Activated naive CD4-positive, alpha-beta T cell treated with anti-CD3 and anti-CD28 coated beads for 36 hours (primary cell): ENCODE measurements at regions of chr20 and their contacts with region 1.

Region 1: GRCh38 chr20:23366384-23366783 is 4.4 kb downstream of the GZF1 start:
- DNase-seq: no peak
- H3K4me3 Mint-ChIP-seq: peak overlapping the region; percentile 34
- H3K27ac Mint-ChIP-seq: peak overlapping the region; percentile 56
- H3K4me1 Mint-ChIP-seq: peaks cover 48% of the 10 kb centered on the region
- H3K27me3 Mint-ChIP-seq: no peaks in the 10 kb centered on the region

Region 2: DNA sequence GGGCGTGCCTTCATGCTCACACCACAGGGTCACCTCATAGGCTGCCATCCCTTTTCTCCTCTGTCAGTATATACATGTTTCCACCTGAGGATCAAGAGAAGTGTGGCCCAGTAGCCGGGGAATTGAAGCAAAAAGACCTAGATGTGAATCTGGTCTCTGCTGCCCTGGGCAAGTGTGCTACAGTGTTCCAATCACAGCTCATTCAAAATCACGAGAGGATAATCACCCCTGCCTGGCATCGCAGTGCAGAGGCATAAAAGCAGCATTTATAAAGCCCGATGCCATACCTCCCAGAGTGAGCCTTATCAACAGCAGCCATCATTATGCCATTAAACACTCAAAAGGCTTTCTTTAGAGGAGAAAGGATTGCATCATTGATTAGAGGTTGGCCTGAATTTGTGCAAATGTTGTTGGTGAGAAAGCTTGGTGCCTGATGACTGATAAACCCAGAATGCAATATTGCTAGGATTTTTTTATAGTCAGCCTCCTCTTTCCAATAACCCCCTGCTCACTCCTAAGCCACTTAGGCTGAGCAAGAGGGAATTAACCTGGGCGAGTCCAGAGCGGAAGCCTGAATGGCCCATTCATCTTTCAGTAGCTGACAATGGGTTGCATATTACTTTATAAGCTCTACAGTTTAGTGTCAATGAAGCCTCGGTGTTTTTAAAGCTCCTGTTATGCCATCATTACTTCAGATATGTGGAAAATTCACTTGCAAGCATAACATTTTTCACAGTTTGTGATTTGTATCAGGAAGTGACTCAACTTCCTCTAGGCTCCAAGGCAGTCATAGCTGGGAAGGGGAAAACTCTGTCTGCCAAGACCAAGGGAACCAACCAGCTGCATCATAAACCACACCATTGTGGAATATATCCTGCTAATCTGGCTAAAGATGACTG is 108.3 kb before region 1 on chr20:
- CTCF ChIA-PET with region 1: no interaction called
- intact Hi-C with region 1: no loop called
- DNase-seq: no peak
- H3K4me3 Mint-ChIP-seq: no peak overlapping the region
- H3K27ac Mint-ChIP-seq: no peak overlapping the region
- H3K4me1 Mint-ChIP-seq: no peaks in the 10 kb centered on the region
- H3K27me3 Mint-ChIP-seq: peaks cover 9% of the 10 kb centered on the region

Region 3: DNA sequence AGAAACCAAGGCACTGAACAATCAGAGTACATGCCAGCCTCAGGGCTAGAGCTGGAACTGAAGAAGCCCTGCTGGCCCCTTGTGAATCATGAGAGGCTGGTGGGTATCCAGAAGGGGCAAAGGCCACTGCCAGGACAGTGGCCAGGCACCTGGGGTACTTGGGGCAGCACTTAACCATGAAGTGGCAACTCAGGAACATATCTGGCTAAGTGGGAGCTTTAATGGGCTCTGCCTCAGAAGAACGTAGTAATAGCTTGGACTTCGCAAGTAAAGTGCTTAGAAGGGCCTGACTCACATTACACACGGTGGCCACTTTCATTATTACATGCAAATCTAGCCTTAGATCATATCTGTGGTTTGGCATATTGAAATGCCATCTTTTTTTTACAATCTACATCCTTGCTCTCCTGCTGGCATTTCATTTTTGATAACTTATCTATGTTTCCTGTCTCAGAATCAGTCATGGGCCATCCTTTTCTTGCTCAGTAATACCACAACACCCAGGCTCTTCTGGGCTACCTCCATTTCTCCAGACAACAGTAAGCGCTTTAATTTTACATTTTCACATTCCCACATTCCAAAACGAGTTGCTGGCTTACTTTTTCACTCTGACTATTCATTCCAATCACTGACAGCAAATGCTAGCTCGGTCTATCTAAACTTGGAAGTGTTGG is 33.3 kb after region 1 on chr20:
- CTCF ChIA-PET with region 1: interaction called, 4 read pairs
- intact Hi-C with region 1: loop called (anchors 1 kb)
- DNase-seq: peak; percentile 15
- H3K4me3 Mint-ChIP-seq: no peak overlapping the region
- H3K27ac Mint-ChIP-seq: no peak overlapping the region
- H3K4me1 Mint-ChIP-seq: peaks cover 27% of the 10 kb centered on the region
- H3K27me3 Mint-ChIP-seq: no peaks in the 10 kb centered on the region

Region 4: DNA sequence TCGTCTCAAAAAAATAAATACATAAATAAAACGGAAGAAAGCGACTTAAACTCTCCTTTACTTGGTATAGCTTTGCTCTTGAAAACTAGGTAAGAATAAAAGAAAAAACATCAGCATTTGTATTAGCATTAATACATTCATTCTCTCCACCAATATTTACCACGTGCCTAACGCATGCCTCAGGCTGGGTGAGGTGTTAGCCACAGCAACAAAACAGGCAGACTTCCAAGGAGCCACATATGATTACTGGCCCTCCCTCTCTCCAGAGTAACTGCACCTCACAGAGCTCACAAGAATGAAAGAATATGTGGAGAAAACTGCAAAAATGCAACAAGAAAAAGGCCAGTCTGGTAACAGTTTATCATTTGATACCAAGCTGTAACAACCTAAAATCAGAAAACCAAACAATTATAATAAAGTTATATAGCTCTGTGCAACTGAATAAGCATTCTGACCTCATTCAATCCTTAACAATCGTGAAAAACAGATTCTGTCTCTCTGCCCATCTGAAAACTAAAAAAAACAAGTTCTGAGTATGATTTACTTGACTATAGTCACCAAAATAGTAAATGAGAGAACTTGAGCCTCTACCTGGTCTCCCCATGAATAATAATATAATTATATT is 49.7 kb after region 1 on chr20:
- CTCF ChIA-PET with region 1: no interaction called
- intact Hi-C with region 1: loop called (anchors 1 kb)
- DNase-seq: no peak
- H3K4me3 Mint-ChIP-seq: no peak overlapping the region
- H3K27ac Mint-ChIP-seq: no peak overlapping the region
- H3K4me1 Mint-ChIP-seq: peaks cover 39% of the 10 kb centered on the region
- H3K27me3 Mint-ChIP-seq: no peaks in the 10 kb centered on the region

Region 5: GRCh38 chr20:23420943-23421931 is 54.9 kb after region 1 on chr20 and contains the start of gene NAPB:
- CTCF ChIA-PET with region 1: no interaction called
- intact Hi-C with region 1: loop called (anchors 1 kb)
- DNase-seq: peak; percentile 94
- H3K4me3 Mint-ChIP-seq: peak within 1 kb of the TSS; percentile 81
- H3K27ac Mint-ChIP-seq: no peak within 1 kb of the TSS
- H3K4me1 Mint-ChIP-seq: peaks cover 24% of the 10 kb centered on the region
- H3K27me3 Mint-ChIP-seq: peaks cover 5% of the 10 kb centered on the region
- total RNA-seq, gene NAPB: 5.4 to 7.6 TPM

Region 6: DNA sequence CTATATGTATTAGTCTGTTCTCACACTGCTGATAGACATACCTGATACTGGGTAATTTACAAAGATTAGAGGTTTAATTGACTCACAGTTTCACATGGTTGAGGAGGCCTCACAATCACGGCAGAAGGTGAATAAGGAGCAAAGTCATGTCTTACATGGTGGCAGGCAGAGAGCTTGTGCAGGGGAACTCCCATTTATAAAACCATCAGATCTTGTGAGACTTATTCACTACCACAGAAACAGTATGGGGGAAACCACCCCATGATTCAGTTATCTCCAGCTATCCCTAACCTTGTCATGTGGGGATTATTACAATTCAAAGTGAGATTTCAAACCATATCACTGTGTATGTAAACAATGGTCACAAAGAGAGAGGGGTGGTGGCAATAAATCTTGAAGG is 131.2 kb after region 1 on chr20:
- CTCF ChIA-PET with region 1: no interaction called
- intact Hi-C with region 1: loop called (anchors 1 kb)
- DNase-seq: peak; percentile 58
- H3K4me3 Mint-ChIP-seq: no peak overlapping the region
- H3K27ac Mint-ChIP-seq: no peak overlapping the region
- H3K4me1 Mint-ChIP-seq: peaks cover 8% of the 10 kb centered on the region
- H3K27me3 Mint-ChIP-seq: peaks cover 20% of the 10 kb centered on the region

Region 7: DNA sequence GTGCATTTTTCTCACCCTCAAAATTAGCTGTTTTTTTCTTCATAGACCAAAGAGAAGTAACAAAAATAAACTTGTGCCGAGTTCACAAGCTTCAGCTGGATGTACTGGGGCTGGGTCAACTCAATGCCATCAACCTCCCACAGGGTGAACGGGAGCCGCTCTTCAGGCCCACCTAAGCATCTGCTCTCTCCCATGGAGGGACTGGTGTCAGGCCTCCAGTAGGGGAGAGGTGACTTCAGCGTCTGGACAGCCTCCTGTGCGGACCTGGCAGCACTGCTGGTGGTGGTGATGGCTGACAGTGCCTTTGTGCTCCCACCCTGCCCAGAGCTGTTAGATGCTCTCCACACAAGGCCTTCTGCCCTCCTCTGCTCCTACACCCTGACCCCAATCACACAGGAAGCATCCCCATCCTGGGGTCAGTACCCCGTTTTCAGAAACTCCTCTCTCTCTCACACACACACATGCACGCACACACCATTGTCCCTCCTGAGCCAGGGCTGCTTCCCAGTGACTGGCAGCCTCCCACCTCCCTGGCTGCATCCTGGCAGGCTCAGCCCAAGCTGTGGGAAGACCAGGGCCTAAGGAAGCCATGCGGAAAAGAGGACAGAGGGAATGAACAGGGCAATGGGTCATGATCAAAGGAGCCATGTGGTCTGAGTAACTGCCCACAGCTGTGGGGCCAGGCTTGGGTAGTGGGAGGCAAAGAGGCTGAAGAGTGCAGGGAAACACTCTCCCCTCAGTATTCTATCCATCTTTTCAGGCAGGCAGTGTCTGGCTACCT is 142.3 kb after region 1 on chr20:
- CTCF ChIA-PET with region 1: no interaction called
- intact Hi-C with region 1: no loop called
- DNase-seq: no peak
- H3K4me3 Mint-ChIP-seq: no peak overlapping the region
- H3K27ac Mint-ChIP-seq: no peak overlapping the region
- H3K4me1 Mint-ChIP-seq: no peaks in the 10 kb centered on the region
- H3K27me3 Mint-ChIP-seq: peaks cover 9% of the 10 kb centered on the region